MCF 10A (cell line): ENCODE measurements at regions of chr13 and their contacts with region 1.

Region 1: DNA sequence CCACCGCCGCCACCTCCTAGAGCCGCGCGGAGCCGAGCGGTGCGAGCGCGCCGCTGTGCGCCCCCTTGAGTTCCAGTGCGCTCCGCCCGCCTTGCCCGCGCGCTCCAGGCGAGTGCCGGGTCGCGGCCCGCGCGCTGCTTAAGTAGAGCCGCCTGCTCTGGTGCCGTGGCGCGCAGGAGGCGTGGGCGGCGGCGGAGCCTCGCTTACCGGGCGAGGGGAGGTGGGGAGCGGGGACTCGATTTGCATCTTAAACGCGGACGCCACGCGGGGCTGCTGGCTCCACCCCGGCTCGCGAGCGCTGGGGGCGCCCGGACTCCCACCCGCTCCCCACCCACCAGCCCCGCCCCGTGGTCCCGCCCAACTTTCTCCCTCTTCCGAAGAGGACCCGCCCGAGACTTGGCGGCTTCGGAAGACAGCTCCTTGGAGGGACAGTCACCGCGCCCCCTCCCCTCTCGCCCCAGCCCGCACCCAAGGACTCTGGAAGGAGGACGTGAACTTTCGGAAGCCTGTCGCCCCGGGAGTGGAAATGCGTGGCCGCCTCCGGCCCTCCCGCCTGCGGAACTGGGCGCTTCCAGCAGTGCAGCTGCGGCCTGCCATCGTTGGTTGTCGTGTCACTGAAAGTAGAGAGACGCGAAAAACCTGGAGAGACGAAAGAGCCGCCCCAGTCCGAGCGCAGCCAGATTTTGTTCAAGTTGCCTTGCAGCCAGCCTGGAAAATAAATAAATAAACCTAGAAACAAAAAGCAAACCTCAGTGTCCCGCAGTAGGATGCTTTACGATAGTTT is at the start of gene KCTD12:
- DNase-seq: peak; percentile 72
- H3K4me3 Mint-ChIP-seq: peak within 1 kb of the TSS; percentile 94
- H3K27ac Mint-ChIP-seq: peak within 1 kb of the TSS; percentile 78
- H3K4me1 Mint-ChIP-seq: peaks cover 35% of the 10 kb centered on the region
- H3K27me3 Mint-ChIP-seq: no peaks in the 10 kb centered on the region
- CTCF ChIP-seq: peak; percentile 25
- total RNA-seq, gene KCTD12: 15.6 and 15.8 TPM in 2 replicates

Region 2: DNA sequence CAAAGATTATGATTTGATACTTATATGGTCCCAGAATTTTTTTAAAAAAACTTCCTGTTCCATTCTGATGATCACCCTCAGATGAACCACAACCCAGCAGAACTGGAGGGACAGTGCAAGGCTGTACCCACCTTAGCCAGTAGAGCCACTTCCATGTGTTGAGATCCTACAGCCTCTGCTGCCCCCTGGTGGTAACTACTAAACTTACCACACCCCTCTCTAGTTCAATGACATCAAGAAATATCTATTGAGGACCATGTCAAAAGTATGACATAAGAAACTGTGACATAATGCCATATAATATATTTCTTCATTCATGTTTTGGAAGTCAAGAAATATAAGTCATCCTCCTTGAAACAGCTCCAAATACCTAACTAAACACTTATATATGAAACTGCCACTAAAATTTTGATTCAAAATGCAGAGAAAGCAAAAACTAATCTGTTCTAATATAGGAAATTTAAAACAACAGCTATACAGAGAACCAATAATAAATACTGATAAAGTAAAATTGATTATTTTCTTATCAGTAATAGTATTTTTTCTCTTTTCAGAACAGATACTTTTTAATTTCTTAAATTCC is 412.8 kb before region 1 on chr13:
- CTCF ChIA-PET with region 1: interaction called, 14 read pairs
- POLR2A ChIA-PET with region 1: interaction called, 3 read pairs
- intact Hi-C with region 1: loop called (anchors 1 kb)
- DNase-seq: peak; percentile 86
- H3K4me3 Mint-ChIP-seq: no peak overlapping the region
- H3K27ac Mint-ChIP-seq: no peak overlapping the region
- H3K4me1 Mint-ChIP-seq: no peaks in the 10 kb centered on the region
- H3K27me3 Mint-ChIP-seq: no peaks in the 10 kb centered on the region
- CTCF ChIP-seq: peak; percentile 87

Region 3: GRCh38 chr13:76717092-76717491 is 169.4 kb before region 1 on chr13:
- CTCF ChIA-PET with region 1: no interaction called
- POLR2A ChIA-PET with region 1: no interaction called
- intact Hi-C with region 1: no loop called
- DNase-seq: peak; percentile 6
- H3K4me3 Mint-ChIP-seq: no peak overlapping the region
- H3K27ac Mint-ChIP-seq: no peak overlapping the region
- H3K4me1 Mint-ChIP-seq: peaks cover 6% of the 10 kb centered on the region
- H3K27me3 Mint-ChIP-seq: no peaks in the 10 kb centered on the region
- CTCF ChIP-seq: no peak

Region 4: DNA sequence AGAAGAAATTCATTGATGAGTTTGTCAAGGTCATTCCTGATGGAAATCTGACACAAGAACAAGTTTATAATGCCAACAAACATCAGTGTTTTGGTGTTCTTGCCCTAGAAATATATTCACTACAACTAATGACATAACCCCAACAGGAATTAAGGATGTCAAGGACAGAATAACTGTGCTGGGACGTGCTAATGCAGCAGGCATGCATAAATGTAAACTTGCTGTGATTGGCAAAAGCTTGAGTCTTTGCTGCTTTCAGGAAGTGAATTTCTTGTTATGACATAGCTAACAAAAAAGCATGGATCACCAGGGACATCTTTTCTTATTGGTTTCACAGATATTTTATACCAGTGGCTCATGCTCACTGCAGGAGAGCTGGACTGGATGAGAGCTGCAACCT is 144.9 kb before region 1 on chr13:
- CTCF ChIA-PET with region 1: no interaction called
- POLR2A ChIA-PET with region 1: no interaction called
- intact Hi-C with region 1: no loop called
- DNase-seq: no peak
- H3K4me3 Mint-ChIP-seq: no peak overlapping the region
- H3K27ac Mint-ChIP-seq: no peak overlapping the region
- H3K4me1 Mint-ChIP-seq: no peaks in the 10 kb centered on the region
- H3K27me3 Mint-ChIP-seq: no peaks in the 10 kb centered on the region
- CTCF ChIP-seq: no peak

Region 5: DNA sequence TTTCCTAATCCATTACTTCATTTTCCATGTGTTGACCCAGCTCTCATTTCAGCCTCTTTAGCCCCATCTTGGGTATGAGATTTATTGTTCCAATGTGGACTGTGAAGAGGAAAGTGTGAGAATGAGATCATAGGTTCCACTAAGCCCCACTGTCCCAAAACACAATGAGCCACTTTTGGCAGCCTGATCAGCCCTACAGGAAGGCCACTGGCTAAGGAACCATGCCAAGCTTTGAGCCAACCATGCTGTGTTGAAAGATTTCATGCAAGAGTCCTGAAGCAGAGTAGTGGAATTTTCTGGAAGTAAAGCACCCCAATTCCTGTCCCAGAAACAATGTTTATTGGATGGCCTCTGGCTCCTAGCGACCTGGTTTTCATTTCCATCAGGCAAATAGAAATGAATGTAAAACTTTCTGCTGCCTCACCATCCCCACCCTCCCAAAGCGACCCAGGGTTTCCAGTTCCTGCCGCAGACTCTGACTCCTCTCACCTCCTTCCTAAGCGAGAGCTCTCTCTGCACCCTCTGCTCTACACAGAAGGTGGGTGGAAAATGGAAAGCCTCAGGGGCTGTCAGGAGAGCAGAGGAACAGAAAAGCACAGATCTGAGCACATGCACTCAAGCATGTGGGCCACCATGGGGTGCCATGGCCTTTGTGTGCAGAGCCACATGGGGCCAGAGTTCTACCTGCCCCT is 73.3 kb before region 1 on chr13:
- CTCF ChIA-PET with region 1: interaction called, 16 read pairs
- POLR2A ChIA-PET with region 1: no interaction called
- intact Hi-C with region 1: no loop called
- DNase-seq: peak; percentile 28
- H3K4me3 Mint-ChIP-seq: no peak overlapping the region
- H3K27ac Mint-ChIP-seq: no peak overlapping the region
- H3K4me1 Mint-ChIP-seq: no peaks in the 10 kb centered on the region
- H3K27me3 Mint-ChIP-seq: peaks cover 5% of the 10 kb centered on the region
- CTCF ChIP-seq: no peak

Region 6: DNA sequence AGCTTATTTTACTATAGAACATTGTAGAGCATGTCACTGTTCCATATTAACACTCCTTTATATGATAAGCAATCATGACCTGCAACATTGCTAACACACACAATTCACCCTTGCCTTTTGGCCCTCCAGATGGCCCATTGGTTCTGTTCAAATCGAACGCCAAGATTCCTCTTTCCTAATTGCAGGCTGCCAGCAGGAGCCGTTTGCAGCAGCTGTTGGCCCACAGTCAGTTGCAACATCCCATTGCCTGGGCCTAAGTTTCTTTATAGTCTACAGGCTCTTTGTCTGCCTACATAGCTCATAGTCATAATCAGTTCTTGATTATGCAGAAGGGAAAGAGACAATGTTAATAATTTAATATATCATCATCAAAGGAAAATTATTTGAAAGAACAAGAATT is 37.9 kb before region 1 on chr13:
- CTCF ChIA-PET with region 1: interaction called, 50 read pairs
- POLR2A ChIA-PET with region 1: interaction called, 71 read pairs
- intact Hi-C with region 1: no loop called
- DNase-seq: peak; percentile 39
- H3K4me3 Mint-ChIP-seq: no peak overlapping the region
- H3K27ac Mint-ChIP-seq: no peak overlapping the region
- H3K4me1 Mint-ChIP-seq: peaks cover 18% of the 10 kb centered on the region
- H3K27me3 Mint-ChIP-seq: no peaks in the 10 kb centered on the region
- CTCF ChIP-seq: no peak

Region 7: DNA sequence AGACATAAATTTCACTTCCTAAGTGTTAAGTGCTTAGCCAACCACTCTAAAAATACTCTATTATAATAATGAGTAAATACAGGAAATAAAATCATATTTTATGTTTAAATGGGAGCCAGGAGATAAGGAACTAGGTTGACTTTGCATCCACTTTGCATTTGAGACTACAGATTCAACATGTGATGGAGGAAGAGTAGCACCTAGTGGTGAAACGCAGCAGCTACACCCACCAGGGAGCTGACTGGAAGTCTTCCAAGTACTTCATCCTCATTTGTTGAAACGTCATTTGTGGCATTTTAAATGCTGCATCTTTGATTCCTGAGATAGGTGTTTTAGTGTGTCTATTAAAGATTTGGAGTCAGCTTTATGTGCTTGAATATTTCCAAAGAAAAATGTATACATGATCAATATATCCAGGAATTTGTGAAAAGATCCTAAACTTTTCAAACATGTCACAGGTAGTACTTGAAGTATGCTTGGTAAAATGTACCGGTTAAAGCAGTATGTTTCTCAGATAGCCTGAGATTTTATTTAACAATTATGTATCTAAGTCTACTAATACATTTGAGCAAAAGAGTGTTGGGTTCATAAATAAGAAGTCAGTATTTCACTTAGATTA is 17.2 kb after region 1 on chr13:
- CTCF ChIA-PET with region 1: interaction called, 45 read pairs
- POLR2A ChIA-PET with region 1: interaction called, 19 read pairs
- intact Hi-C with region 1: no loop called
- DNase-seq: peak; percentile 79
- H3K4me3 Mint-ChIP-seq: no peak overlapping the region
- H3K27ac Mint-ChIP-seq: no peak overlapping the region
- H3K4me1 Mint-ChIP-seq: peaks cover 9% of the 10 kb centered on the region
- H3K27me3 Mint-ChIP-seq: no peaks in the 10 kb centered on the region
- CTCF ChIP-seq: peak; percentile 98

Region 8: GRCh38 chr13:77002590-77003190 is 116.2 kb after region 1 on chr13:
- CTCF ChIA-PET with region 1: interaction called, 19 read pairs
- POLR2A ChIA-PET with region 1: no interaction called
- intact Hi-C with region 1: no loop called
- DNase-seq: peak; percentile 49
- H3K4me3 Mint-ChIP-seq: no peak overlapping the region
- H3K27ac Mint-ChIP-seq: peak overlapping the region; percentile 69
- H3K4me1 Mint-ChIP-seq: peaks cover 6% of the 10 kb centered on the region
- H3K27me3 Mint-ChIP-seq: no peaks in the 10 kb centered on the region
- CTCF ChIP-seq: peak; percentile 55